Left lung (tissue), 14 donors: ENCODE measurements at regions of chr9 and their contacts with region 1.

Region 1: DNA sequence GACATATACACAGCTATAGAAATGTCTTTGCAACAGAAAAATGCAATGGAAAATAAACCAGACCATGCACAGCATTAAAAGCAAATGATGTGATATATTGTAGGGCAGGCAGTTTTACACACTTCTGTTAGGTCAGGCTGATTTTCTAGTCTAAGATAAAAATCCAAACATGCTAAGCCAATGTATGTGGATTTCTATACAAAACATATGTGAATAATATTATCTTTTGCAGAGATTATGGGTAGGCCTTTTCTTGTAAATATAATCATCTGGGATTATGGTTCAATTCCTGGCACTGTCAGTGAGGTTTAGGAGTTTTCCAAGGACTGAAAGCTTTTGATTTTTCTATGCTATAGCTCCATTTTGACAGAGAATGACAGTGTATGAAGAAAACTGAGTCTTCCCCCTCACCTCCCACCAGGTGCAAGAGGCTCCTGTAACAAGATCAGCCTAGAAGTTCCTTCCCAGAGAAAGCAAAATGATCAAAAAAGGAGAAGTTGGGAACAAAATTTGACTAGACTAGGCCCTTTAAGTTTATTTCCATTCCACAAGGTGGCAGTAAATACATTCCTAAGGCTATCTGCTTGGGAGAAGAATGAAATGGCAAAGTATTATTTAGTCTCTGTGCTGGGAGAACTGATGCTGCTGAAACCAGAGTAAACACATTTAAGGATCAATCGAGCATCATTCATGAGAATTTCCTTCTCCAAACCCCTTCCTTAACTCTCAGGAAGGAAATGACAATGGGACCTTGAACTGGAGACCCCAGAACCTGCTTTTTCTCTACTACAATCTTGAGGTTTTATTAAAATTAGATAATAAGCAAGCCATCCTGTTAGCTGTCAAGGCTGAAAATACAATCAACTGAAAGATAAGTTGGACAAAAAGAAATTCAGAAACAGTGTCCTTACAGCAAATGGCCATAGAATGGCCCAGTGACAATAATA is 133.0 kb upstream of the TUT7 start:
- DNase-seq: peak in 2 of 4 donors; percentile 53 to 72
- ATAC-seq: peak; percentile 76
- H3K4me3 ChIP-seq: no peak overlapping the region
- H3K27ac ChIP-seq: no peak overlapping the region
- H3K4me1 ChIP-seq: no peaks in the 10 kb centered on the region
- H3K27me3 ChIP-seq: no peaks in the 10 kb centered on the region
- CTCF ChIP-seq: peak in 1 of 2 donors; percentile 51

Region 2: DNA sequence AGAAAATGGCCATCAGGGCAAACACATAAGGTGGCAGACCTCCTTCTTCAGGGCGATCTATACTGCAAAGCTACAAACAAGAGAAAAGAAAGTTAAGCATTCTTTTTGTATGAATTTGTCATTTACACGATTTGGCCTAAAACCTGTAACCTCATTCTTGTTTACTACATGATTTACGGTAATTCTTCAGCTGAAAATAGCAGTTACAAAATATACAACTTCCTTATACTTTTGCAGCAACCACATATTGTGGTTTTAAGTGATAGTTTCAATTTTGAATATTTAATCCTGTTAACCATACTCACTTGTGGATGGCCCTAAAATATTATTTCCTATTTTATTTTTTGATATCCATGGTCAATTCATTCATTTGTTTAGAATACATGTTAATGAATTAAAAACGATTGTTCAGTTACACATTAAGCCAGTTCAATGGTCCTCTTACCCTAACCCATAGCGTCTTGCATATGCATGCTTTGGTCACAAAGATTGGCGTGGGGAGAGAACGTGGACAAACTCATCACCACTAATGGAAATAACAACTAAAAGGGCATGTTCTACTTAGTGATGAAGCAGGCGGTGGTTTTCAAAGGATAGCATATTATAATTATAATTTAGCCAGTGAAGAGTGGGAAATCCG is 149.6 kb before region 1 on chr9:
- intact Hi-C with region 1: no loop called
- DNase-seq: no peak
- ATAC-seq: no peak
- H3K4me3 ChIP-seq: peak overlapping the region in 1 of 2 donors; percentile 24
- H3K27ac ChIP-seq: peak overlapping the region in 1 of 2 donors; percentile 64
- H3K4me1 ChIP-seq: peaks cover 0 to 45% of the 10 kb centered on the region in 2 donors
- H3K27me3 ChIP-seq: no peaks in the 10 kb centered on the region
- CTCF ChIP-seq: no peak

Region 3: GRCh38 chr9:87324613-87325194 is 837.5 kb after region 1 on chr9:
- intact Hi-C with region 1: loop called in 1 of 2 experiments (anchors 5 kb)
- DNase-seq: peak in 2 of 4 donors; percentile 56 to 72
- ATAC-seq: peak; percentile 89
- H3K4me3 ChIP-seq: no peak overlapping the region
- H3K27ac ChIP-seq: no peak overlapping the region
- H3K4me1 ChIP-seq: no peaks in the 10 kb centered on the region
- H3K27me3 ChIP-seq: no peaks in the 10 kb centered on the region
- CTCF ChIP-seq: peak; percentile 68 to 73